Activated naive CD4-positive, alpha-beta T cell treated with anti-CD3 and anti-CD28 coated beads for 36 hours (primary cell): ENCODE measurements at regions of chr2 and their contacts with region 1.

Region 1: GRCh38 chr2:218395797-218396687 is 3.6 kb upstream of the CTDSP1 start:
- DNase-seq: peak; percentile 95
- H3K4me3 Mint-ChIP-seq: peak overlapping the region; percentile 88
- H3K27ac Mint-ChIP-seq: peak overlapping the region; percentile 92
- H3K4me1 Mint-ChIP-seq: peaks cover 25% of the 10 kb centered on the region
- H3K27me3 Mint-ChIP-seq: peaks cover 11% of the 10 kb centered on the region

Region 2: DNA sequence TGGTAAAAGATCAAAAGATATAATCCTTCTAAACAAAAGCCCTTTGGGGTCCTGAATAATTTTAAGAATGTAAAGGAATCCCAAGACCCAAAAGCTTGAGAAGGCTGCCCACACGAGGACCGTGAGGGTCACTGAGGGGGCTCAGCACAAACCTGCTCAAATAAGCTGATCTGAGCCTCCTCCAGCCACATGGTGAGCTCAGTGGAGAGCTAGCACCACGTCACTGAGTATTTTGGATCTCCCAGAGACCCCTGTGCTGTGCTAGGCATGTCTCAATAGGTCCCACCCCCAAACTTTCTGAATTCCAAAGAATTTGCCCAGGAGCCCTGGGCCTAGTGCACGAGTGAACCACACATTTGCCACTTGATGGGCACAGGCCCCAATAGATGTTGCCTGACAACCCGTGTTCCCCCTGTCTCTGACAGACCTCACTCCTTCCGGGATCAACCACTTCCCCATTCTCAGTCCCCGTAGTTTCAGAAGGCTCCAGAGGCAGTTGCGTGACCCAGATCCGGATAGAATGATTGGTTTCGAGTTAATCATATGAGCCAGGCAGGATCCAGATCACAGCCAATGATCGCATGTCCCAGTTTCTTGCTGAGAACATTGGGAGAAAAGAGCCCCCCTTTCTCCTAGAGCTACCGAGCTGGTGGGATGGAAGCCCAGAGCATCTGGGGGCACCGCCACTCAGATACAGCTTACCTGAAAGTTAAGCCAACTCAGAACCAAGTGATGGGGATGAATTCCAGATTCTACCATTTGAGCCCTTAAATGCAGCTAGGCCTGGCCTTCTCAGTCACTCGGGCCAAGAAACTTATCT is 597.1 kb before region 1 on chr2:
- CTCF ChIA-PET with region 1: no interaction called
- intact Hi-C with region 1: no loop called
- DNase-seq: no peak
- H3K4me3 Mint-ChIP-seq: no peak overlapping the region
- H3K27ac Mint-ChIP-seq: no peak overlapping the region
- H3K4me1 Mint-ChIP-seq: no peaks in the 10 kb centered on the region
- H3K27me3 Mint-ChIP-seq: no peaks in the 10 kb centered on the region

Region 3: GRCh38 chr2:217851191-217852020 is 544.6 kb before region 1 on chr2:
- CTCF ChIA-PET with region 1: no interaction called
- intact Hi-C with region 1: no loop called
- DNase-seq: no peak
- H3K4me3 Mint-ChIP-seq: no peak overlapping the region
- H3K27ac Mint-ChIP-seq: no peak overlapping the region
- H3K4me1 Mint-ChIP-seq: no peaks in the 10 kb centered on the region
- H3K27me3 Mint-ChIP-seq: peaks cover 2% of the 10 kb centered on the region

Region 4: DNA sequence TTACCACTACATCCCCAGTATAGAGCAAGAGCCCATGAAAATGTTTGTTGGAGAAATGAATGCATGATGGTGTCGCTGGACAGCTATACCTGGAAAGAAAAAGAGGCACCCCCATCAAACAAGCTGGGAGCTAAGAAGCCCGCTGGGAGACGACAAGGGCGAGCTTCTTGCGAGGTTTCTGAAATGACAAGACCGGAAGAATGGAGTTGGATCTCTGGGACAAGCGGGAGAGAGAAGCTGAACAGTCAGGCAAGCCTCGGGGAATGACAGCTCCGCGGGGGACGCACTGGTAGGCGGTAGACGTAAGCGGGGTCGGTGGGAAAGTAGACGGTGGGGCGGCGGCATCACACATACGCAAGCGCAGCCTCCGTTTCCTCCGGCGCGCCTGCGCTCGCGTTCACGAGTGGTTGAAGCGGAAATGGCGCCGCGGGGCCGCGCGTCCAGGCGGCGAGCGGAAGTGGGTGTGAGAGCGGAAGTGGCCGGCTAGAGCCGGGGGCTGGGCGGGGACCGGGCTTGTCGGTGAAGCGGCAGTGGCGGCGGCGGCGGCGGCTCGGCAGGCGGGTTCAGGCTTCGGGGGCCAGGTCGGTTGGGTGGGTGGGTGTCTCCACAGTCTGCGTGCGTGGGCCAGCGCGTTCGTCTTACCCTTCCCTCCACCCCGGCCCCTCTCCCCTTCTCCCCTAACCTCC is 179.2 kb before region 1 on chr2 and contains the start of gene ARPC2:
- CTCF ChIA-PET with region 1: no interaction called
- intact Hi-C with region 1: loop called (anchors 1 kb)
- DNase-seq: peak; percentile 95
- H3K4me3 Mint-ChIP-seq: peak within 1 kb of the TSS; percentile 78
- H3K27ac Mint-ChIP-seq: peak within 1 kb of the TSS; percentile 88
- H3K4me1 Mint-ChIP-seq: peaks cover 29% of the 10 kb centered on the region
- H3K27me3 Mint-ChIP-seq: no peaks in the 10 kb centered on the region
- total RNA-seq, gene ARPC2: 461 to 475 TPM

Region 5: DNA sequence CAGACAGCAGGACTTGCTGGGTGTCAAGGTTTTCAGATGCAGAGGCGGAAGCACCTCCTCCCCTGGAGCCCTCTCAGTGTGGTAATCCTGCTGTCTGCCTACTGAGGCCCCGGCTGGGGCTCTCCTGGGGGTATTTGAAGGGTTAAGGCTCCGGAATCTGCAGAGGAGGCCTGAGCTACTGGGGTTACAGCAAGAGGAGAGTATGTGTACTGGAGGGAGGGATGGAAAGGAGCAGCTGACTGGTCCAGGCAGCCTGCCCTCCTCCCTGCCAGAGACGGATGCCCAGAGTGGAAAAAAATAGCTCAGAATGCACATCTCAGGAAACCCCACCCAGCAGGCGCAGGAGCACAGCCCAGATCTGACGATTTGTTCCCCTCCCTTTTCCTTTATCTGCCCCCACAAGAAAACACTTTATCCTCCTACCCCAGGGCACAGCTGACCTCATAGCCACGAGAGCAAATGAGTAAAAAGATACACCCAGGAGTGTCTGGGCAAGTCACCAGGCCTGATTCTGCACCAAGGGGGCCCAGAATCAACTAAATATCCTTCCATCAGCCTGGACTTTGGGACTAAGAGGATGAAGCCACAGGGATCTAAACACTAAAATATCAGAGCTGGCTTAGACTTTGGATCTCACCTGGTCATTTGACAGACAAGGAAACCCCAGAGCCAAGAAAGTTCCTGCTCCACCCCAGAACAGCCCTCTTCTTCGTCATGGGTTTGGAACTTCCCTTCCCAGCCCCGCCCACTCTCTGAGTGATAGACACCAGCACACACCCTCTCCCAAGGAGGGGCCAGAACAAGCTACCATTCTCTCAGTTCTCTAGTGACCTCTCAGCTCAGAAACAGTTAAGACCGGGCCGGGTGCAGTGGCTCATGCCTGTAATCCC is 109.2 kb before region 1 on chr2:
- CTCF ChIA-PET with region 1: interaction called, 9 read pairs
- intact Hi-C with region 1: loop called (anchors 1 kb)
- DNase-seq: peak; percentile 95
- H3K4me3 Mint-ChIP-seq: peak overlapping the region; percentile 80
- H3K27ac Mint-ChIP-seq: peak overlapping the region; percentile 98
- H3K4me1 Mint-ChIP-seq: peaks cover 73% of the 10 kb centered on the region
- H3K27me3 Mint-ChIP-seq: no peaks in the 10 kb centered on the region

Region 6: DNA sequence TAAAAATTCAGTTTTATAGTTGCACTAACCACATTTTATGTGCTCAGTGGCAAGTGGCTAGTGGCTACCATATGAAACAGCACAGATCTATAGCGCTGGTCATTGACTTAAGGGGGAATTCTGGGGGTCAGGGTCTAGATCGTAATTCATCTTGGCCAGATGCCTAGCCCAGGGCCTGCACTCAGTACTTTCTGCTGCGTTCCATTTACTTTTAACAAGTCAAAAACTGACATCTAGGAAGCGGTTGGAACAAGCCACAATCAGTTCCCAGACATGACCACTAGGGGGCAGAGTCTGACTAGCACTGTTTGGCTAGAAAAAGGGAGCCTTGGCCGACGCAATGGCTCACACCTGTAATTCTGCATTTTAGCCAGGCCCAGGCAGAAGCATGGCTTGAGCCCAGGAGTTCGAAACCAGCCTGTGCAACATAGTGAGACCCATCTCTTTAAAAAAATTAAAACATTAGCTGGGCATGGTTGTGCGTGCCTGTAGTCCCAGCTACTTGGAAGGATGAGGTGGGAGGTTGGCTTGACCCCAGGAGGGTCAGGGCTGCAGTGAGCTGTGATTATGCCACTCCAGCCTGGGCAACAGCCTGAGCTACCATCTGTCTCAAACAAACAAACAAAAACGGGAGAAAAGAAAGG is 94.7 kb before region 1 on chr2:
- CTCF ChIA-PET with region 1: interaction called, 10 read pairs
- intact Hi-C with region 1: loop called (anchors 1 kb)
- DNase-seq: peak; percentile 97
- H3K4me3 Mint-ChIP-seq: no peak overlapping the region
- H3K27ac Mint-ChIP-seq: no peak overlapping the region
- H3K4me1 Mint-ChIP-seq: peaks cover 5% of the 10 kb centered on the region
- H3K27me3 Mint-ChIP-seq: no peaks in the 10 kb centered on the region

Region 7: DNA sequence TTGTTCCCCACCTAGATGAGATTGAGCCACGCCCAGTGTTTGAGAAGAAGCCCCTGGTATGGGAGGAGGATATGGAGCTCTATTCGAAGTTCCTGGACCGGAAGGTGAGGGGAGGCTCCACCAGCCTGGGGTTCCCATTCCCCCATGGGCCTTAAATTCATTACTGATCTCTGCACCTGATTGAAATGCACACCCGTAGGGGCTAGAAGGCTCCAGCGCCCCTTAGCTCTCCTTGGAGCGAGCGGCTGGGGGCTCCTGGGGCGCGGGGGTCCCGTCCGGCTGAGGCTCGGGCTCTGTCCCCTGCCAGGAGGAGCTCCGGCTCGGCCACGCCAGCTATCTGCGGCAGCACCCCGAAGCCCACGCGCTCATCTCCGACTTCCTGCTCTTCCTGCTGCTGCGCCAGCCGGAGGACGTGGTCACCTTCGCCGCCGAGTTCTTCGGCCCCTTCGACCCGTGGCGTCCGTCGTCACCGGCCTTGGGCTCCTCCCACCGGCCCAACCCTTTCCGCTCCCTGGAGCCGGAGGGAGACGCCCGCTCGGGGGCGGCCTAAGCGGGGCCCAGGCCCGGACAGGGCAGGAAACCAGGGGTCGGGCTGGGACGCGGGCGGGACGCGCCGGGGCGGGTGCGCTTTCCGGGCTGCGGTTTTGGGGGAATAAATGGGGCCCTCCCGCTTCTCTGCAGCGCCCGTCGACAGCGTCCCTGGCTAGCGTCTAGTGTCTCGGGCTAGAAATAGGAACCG is 28.5 kb before region 1 on chr2:
- CTCF ChIA-PET with region 1: interaction called, 4 read pairs
- intact Hi-C with region 1: loop called (anchors 2 kb)
- DNase-seq: peak; percentile 84
- H3K4me3 Mint-ChIP-seq: peak overlapping the region; percentile 73
- H3K27ac Mint-ChIP-seq: no peak overlapping the region
- H3K4me1 Mint-ChIP-seq: peaks cover 13% of the 10 kb centered on the region
- H3K27me3 Mint-ChIP-seq: no peaks in the 10 kb centered on the region

Region 8: GRCh38 chr2:218429571-218430301 is 33.7 kb after region 1 on chr2:
- CTCF ChIA-PET with region 1: no interaction called
- intact Hi-C with region 1: no loop called
- DNase-seq: no peak
- H3K4me3 Mint-ChIP-seq: no peak overlapping the region
- H3K27ac Mint-ChIP-seq: no peak overlapping the region
- H3K4me1 Mint-ChIP-seq: no peaks in the 10 kb centered on the region
- H3K27me3 Mint-ChIP-seq: no peaks in the 10 kb centered on the region

Region 9: DNA sequence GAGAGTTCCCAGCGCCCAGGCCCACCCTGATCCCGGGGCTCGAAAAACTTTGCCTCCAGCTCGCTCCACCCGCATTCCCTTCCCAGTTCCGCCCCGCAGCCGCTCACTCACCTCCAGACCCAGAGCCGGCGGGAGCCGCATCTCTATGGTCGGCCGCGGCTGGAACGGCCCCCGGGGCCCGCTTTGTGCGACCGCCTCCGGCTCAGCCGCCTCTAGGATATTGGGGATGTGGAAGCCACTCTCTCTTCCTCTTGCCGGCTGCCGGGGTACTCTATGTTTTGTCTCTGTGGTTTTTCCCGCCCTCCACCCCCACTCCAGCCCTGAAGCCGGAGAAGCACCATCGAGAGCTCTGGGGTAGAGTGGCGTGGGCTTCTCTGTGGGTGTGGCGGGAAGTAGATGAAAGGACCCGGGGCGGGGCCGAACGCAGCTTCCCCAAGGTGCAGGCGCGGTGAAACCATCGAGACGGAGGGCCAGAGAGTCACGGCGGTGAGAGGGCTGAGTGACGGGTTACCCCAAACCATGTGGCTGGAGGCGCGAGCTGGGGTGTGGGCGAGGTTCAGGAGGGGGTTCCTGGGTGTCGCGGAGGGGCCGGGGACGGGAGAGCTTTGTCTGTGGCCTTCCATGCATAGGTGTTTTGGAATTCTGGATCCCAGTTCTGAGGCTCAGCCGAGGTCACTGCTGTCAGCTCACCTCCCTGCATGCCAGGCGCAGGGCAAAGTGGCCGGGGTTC is 263.4 kb after region 1 on chr2 and contains the starts of genes BCS1L and ZNF142:
- CTCF ChIA-PET with region 1: no interaction called
- intact Hi-C with region 1: no loop called
- DNase-seq: peak; percentile 98
- H3K4me3 Mint-ChIP-seq: peak within 1 kb of the TSS; percentile 90
- H3K27ac Mint-ChIP-seq: peak within 1 kb of the TSS; percentile 81
- H3K4me1 Mint-ChIP-seq: peaks cover 40% of the 10 kb centered on the region
- H3K27me3 Mint-ChIP-seq: no peaks in the 10 kb centered on the region
- total RNA-seq, gene BCS1L: 61.3 to 63.6 TPM
- total RNA-seq, gene ZNF142: 28.0 to 28.4 TPM

Region 10: GRCh38 chr2:218710687-218711549 is 314.9 kb after region 1 on chr2 and contains the start of gene TTLL4:
- CTCF ChIA-PET with region 1: no interaction called
- intact Hi-C with region 1: loop called (anchors 2 kb)
- DNase-seq: peak; percentile 99
- H3K4me3 Mint-ChIP-seq: peak within 1 kb of the TSS; percentile 98
- H3K27ac Mint-ChIP-seq: peak within 1 kb of the TSS; percentile 80
- H3K4me1 Mint-ChIP-seq: peaks cover 15% of the 10 kb centered on the region
- H3K27me3 Mint-ChIP-seq: peaks cover 3% of the 10 kb centered on the region
- total RNA-seq, gene TTLL4: 23.7 to 24.7 TPM

Region 11: GRCh38 chr2:219253753-219254590 is 857.9 kb after region 1 on chr2 and contains the start of gene TUBA4A:
- CTCF ChIA-PET with region 1: no interaction called
- intact Hi-C with region 1: loop called (anchors 10 kb)
- DNase-seq: peak; percentile 89
- H3K4me3 Mint-ChIP-seq: peak within 1 kb of the TSS; percentile 70
- H3K27ac Mint-ChIP-seq: peak within 1 kb of the TSS; percentile 95
- H3K4me1 Mint-ChIP-seq: peaks cover 49% of the 10 kb centered on the region
- H3K27me3 Mint-ChIP-seq: no peaks in the 10 kb centered on the region
- total RNA-seq, gene TUBA4A: 112 to 116 TPM